A673 (cell line): ENCODE measurements at regions of chr6 and their contacts with region 1.

Region 1: DNA sequence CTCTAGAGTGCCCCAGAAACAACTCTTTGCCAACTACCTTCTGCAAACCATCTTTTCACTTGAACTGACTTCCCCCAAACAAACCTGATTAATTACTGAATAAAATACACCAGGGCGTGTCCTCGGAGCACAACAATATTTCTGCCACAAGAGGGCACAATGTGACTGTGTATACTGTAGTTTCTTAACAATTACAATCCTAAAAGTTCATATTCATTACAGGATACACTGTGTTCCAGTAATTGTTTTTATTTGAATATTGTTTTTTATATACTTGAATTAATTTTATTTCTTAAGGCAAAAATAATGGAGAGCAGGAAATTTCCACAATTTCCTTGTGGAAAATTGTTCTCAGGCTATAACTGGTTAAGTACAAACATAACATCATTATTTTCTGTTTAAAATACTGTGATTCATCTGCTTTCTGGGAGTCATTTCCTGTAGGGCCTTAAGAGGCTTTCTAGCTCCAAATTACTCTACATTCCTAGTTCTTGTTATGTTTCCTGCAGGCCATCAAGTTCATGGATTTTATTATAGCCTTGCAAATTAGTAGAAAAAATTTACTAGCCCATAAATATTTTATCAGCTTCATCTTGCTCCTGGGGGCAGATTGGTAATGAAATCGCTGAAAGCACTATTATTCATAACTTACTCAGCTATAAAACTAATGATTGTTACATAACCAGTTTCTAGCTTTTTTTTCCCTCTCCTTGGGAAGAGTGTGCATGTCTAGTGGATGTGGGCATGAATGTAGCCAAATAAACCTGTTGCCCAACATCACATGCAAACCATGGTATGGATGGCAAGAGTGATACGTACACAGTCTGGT is 51.9 kb upstream of the SLC22A16 start:
- DNase-seq: peak; percentile 95
- H3K4me3 ChIP-seq: no peak overlapping the region
- H3K27ac ChIP-seq: peak overlapping the region; percentile 3
- H3K4me1 ChIP-seq: peaks cover 21% of the 10 kb centered on the region
- H3K27me3 ChIP-seq: peaks cover 27% of the 10 kb centered on the region
- CTCF ChIP-seq: peak; percentile 93

Region 2: GRCh38 chr6:110682460-110682853 is 154.1 kb after region 1 on chr6:
- CTCF ChIA-PET with region 1: no interaction called
- POLR2A ChIA-PET with region 1: no interaction called
- intact Hi-C with region 1: loop called (anchors 5 kb)
- DNase-seq: peak; percentile 87
- H3K4me3 ChIP-seq: no peak overlapping the region
- H3K27ac ChIP-seq: no peak overlapping the region
- H3K4me1 ChIP-seq: no peaks in the 10 kb centered on the region
- H3K27me3 ChIP-seq: no peaks in the 10 kb centered on the region
- CTCF ChIP-seq: peak; percentile 77

Region 3: DNA sequence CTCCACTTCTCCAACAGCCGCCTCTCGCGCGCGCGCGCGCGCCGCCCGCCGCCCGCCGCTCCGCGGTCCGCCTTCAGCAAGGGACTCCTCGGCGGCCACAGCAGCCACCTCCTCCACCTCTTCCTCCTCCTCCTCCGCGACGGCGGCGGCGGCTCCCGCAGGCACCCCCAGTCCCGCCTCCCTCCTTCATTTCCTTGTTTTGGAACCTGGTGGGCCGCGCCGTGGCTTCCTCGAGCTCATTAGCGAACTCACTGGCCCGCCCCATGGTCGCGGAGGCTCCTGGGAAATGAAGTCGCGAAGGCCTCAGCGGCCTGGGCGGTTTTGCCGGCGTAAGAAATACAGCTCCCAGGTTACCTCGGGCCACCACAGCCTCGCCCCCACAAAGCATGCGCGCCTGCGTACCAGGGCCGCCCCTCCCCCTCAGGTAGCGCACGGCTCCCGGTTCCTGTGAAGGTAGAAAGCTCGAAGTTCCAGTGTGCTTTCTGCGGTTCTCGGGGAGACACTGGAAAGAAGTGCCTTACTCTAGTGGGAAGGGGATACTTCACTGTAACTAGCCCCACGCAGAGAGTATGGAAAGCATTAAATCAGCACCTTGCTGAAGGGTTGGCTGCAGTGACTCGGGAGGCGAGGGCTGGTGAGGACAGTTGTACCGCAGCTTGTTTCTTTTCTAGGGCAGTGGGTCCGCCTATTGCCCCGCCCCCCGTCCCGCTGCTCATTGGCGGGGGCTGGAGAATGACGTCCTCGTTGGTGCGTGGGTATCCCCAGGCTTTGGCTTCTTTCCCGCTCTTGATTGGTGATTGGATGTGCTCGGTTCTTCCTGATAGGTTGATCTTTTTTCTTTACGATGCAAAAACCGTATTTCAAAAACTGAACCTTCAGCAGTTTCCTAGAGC is 287.1 kb after region 1 on chr6 and contains the start of gene CDK19:
- CTCF ChIA-PET with region 1: no interaction called
- POLR2A ChIA-PET with region 1: no interaction called
- intact Hi-C with region 1: loop called (anchors 1 kb)
- DNase-seq: peak; percentile 99
- H3K4me3 ChIP-seq: peak within 1 kb of the TSS; percentile 74
- H3K27ac ChIP-seq: peak within 1 kb of the TSS; percentile 97
- H3K4me1 ChIP-seq: peaks cover 10% of the 10 kb centered on the region
- H3K27me3 ChIP-seq: no peaks in the 10 kb centered on the region
- CTCF ChIP-seq: no peak
- total RNA-seq, gene CDK19: 23.7 and 27.4 TPM in 2 replicates

Region 4: GRCh38 chr6:110949679-110950285 is 421.5 kb after region 1 on chr6:
- CTCF ChIA-PET with region 1: no interaction called
- POLR2A ChIA-PET with region 1: no interaction called
- intact Hi-C with region 1: loop called (anchors 2 kb)
- DNase-seq: peak; percentile 43
- H3K4me3 ChIP-seq: no peak overlapping the region
- H3K27ac ChIP-seq: no peak overlapping the region
- H3K4me1 ChIP-seq: peaks cover 4% of the 10 kb centered on the region
- H3K27me3 ChIP-seq: no peaks in the 10 kb centered on the region
- CTCF ChIP-seq: peak; percentile 66

Region 5: GRCh38 chr6:110999634-111000270 is 471.4 kb after region 1 on chr6:
- CTCF ChIA-PET with region 1: no interaction called
- POLR2A ChIA-PET with region 1: no interaction called
- intact Hi-C with region 1: loop called (anchors 10 kb)
- DNase-seq: peak; percentile 19
- H3K4me3 ChIP-seq: no peak overlapping the region
- H3K27ac ChIP-seq: no peak overlapping the region
- H3K4me1 ChIP-seq: no peaks in the 10 kb centered on the region
- H3K27me3 ChIP-seq: no peaks in the 10 kb centered on the region
- CTCF ChIP-seq: peak; percentile 45

Region 6: DNA sequence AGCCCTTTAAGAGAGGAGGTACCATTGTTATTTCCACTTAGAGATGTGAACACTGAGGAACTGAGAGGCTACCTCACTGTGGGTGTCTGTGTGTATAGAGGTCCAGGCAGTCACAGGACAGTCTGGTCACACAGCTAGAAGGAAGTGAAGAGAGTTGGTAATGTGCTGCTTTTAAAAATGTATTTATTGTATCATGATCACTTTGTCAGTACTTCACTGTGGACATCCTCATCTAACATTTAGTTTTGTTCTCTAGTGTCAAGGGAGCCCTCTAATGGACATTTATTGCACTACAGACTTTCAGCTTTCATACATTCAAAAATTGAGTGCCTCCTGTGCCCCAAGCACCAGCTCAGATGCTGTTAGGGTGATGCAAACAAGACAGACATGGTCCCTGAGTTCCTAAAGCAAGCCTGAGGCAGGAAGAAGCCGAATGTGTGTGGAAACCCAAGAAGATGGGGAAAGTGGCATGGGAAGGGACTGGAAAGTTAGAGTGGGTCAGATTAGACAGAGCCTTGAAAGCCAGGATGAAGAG is 681.9 kb after region 1 on chr6:
- CTCF ChIA-PET with region 1: no interaction called
- POLR2A ChIA-PET with region 1: interaction called, 4 read pairs
- intact Hi-C with region 1: loop called (anchors 5 kb)
- DNase-seq: peak; percentile 71
- H3K4me3 ChIP-seq: no peak overlapping the region
- H3K27ac ChIP-seq: no peak overlapping the region
- H3K4me1 ChIP-seq: no peaks in the 10 kb centered on the region
- H3K27me3 ChIP-seq: no peaks in the 10 kb centered on the region
- CTCF ChIP-seq: peak; percentile 82

Region 7: DNA sequence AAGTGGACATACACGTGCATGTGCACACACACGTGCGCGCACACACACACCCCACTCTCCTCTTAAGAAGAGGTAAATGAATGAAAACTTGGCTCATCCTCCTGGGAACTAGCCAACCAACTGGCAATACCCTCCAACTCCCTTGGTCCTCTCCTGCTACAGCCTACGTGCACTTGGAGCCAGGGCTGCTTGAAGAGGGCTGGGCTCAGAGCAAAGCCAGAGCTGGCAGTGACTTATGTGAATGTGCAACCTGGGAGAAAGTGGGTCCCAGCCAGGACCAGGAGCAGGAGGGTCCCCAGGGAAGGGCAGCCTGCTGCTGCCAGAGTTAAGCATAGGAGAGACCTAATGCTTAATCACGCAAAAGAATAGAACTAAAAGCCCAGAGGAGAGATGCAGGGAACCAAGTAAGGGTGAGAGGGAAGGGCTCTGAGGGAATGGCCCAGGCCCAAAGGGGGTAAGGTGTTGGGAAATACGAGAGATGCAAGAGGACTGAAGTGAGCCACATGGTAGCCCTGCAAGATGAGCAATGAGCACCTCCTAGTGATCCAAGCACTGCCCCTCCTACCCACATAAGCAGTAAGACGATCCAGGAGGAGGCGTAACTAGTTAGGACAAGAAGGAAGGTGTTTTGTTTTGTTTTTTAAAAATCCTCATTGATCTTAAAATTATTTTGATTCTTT is 1052.7 kb after region 1 on chr6:
- CTCF ChIA-PET with region 1: no interaction called
- POLR2A ChIA-PET with region 1: no interaction called
- intact Hi-C with region 1: no loop called
- DNase-seq: peak; percentile 35
- H3K4me3 ChIP-seq: no peak overlapping the region
- H3K27ac ChIP-seq: no peak overlapping the region
- H3K4me1 ChIP-seq: peaks cover 9% of the 10 kb centered on the region
- H3K27me3 ChIP-seq: no peaks in the 10 kb centered on the region
- CTCF ChIP-seq: peak; percentile 46